HepG2 (cell line): ENCODE measurements at regions of chr10 and their contacts with region 1.

Region 1: DNA sequence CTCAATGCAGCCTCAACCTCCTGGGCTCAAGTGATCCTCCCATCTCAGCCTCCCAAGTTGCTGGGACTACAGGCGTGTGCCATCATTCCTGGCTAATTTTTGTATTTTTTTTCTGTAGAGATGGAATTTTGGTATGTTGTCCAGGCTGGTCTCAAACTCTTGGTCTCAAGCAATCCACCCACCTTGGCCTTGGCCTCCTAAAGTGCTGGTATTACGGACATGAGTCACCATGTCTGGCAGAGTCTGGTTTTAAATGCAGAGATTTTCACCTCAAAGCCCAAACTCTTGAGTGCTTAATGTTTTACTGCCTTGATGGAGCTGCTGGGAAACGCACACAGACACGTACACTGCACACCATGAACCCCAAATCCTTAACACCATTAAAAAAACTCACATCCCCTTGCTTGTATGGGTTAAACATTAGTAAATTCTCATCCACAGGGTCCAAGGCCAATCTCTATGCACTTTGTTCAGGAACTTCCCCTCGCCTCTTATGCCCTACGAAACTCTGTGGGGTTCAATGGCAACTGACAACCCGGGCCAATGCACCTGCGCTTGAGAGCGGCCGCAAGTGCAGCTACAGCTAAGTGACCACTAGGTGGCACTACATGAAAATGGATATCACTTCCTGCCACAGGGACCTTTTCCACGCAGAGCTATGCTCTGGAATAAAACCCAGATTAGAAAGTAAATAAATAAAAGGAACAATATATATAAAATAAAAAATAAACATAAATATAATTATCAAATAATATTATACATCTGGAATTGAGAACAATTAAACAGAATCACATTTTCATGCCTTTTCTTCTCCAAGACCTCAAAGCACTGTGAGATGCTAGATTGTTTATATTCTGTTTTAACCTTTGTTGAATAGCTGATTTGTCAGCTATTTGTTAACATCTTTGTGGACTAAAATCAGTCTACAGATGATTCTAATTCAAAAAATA is 66.9 kb upstream of the AFAP1L2 start:
- DNase-seq: peak; percentile 65
- ATAC-seq: peak; percentile 83
- H3K4me3 ChIP-seq: no peak overlapping the region
- H3K27ac ChIP-seq: peak overlapping the region; percentile 16
- H3K4me1 ChIP-seq: peaks cover 51% of the 10 kb centered on the region
- H3K27me3 ChIP-seq: no peaks in the 10 kb centered on the region
- CTCF ChIP-seq: peak; percentile 85
- EP300 ChIP-seq: no peak
- POLR2A ChIP-seq: no peak
- RAD21 ChIP-seq: peak; percentile 66

Region 2: GRCh38 chr10:114304017-114304570 is 167.1 kb before region 1 on chr10:
- CTCF ChIA-PET with region 1: no interaction called
- POLR2A ChIA-PET with region 1: no interaction called
- in situ Hi-C with region 1: no loop called
- intact Hi-C with region 1: loop called (anchors 1 kb)
- DNase-seq: peak; percentile 62
- ATAC-seq: peak; percentile 86
- H3K4me3 ChIP-seq: no peak overlapping the region
- H3K27ac ChIP-seq: no peak overlapping the region
- H3K4me1 ChIP-seq: peaks cover 5% of the 10 kb centered on the region; the same call in 1 of the 2 replicates
- H3K27me3 ChIP-seq: peaks cover 2 to 46% of the 10 kb centered on the region in 2 experiments
- CTCF ChIP-seq: peak; percentile 89
- EP300 ChIP-seq: no peak
- POLR2A ChIP-seq: no peak
- RAD21 ChIP-seq: peak; percentile 68

Region 3: GRCh38 chr10:114489521-114490310 is 18.5 kb after region 1 on chr10:
- CTCF ChIA-PET with region 1: interaction called, 4 read pairs
- POLR2A ChIA-PET with region 1: no interaction called
- in situ Hi-C with region 1: no loop called
- intact Hi-C with region 1: loop called (anchors 1 kb)
- DNase-seq: peak; percentile 99
- ATAC-seq: peak; percentile 99
- H3K4me3 ChIP-seq: peak overlapping the region in 1 of 3 experiments; percentile 29; a peak in 1 of 6 replicates
- H3K27ac ChIP-seq: peak overlapping the region; percentile 91
- H3K4me1 ChIP-seq: peaks cover 72% of the 10 kb centered on the region
- H3K27me3 ChIP-seq: no peaks in the 10 kb centered on the region
- CTCF ChIP-seq: no peak
- EP300 ChIP-seq: peak; percentile 59 to 93
- POLR2A ChIP-seq: peak in 1 of 2 experiments; percentile 46; a peak in 2 of 4 replicates
- RAD21 ChIP-seq: no peak

Region 4: DNA sequence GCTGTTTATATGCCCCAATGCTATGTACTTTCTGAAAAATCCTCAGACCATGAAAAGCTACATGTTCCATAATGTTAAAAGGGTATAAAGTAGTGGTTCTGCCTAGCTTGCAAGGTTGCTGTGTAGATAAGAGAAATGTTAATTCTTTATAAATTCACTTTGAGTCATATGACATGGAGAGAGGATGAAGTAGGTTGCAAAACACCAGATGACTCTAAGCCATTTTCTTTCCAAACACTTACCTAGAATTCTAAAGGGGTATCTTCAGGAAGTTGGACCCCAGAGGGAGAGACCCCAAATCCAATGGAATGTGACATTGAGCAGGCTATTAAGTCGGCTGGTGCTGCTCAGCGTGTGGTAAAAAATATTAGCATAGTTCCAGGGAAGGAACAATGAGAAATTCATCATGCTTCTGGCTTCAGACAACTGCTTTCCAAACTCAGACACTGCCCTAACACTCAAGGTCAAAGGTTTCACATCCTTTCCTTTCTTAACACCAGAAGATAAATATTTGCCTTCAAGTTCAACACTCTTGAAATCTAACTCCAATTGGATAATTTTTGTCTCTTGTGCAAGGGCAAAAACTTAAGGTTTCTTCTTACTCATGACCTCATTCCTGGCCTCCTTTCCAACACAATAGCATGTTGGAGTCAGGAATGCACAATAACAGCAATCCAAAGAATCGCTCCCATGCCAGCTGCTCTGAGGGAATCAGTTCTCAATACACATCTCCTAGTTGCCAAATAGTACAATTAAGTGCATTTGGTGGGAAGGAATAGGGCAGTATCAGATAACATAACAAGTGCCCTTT is 33.7 kb after region 1 on chr10:
- CTCF ChIA-PET with region 1: no interaction called
- POLR2A ChIA-PET with region 1: no interaction called
- in situ Hi-C with region 1: no loop called
- intact Hi-C with region 1: loop called (anchors 5 kb)
- DNase-seq: peak; percentile 67
- ATAC-seq: peak; percentile 71
- H3K4me3 ChIP-seq: no peak overlapping the region
- H3K27ac ChIP-seq: peak overlapping the region; percentile 16
- H3K4me1 ChIP-seq: peaks cover 68% of the 10 kb centered on the region
- H3K27me3 ChIP-seq: no peaks in the 10 kb centered on the region
- CTCF ChIP-seq: no peak
- EP300 ChIP-seq: peak in 1 of 2 experiments; percentile 47; a peak in 1 of 4 replicates
- POLR2A ChIP-seq: no peak
- RAD21 ChIP-seq: no peak

Region 5: DNA sequence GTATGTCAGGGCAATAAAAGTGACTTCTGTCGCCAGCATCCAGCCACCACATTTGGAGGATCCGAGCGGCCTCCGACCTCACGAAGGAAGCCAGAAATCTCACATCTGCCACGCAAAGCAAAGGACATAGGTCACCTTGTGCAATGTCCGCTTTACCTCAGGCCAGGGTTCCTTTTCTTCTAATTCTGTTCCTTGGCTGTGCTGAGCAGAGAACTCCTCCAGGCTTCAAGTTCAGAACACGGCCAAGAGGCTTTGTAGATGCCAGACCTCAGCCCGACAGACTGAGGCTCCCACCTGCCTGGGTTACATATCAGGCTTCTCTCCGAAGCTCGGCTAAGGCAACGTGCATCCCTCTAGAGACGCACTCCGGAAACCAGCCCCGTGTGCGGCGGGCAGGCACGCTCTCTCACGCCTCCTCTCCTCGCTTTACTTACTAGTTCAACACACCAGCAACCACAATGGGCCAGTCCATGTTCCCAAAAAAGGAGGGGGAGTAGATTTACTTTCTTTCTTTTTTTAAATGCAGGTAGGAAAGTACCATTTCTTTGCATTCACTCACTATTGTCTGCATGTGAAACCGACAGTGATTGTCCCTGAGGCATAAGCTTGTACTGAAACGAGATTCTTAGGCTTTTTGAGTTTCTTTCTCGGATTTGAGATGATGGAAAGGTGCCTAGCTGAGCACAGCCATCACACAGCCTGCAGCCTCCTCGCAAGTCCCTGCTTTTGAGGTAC is 55.4 kb after region 1 on chr10:
- CTCF ChIA-PET with region 1: no interaction called
- POLR2A ChIA-PET with region 1: interaction called, 3 read pairs
- in situ Hi-C with region 1: no loop called
- intact Hi-C with region 1: loop called (anchors 1 kb)
- DNase-seq: peak; percentile 88
- ATAC-seq: peak; percentile 99
- H3K4me3 ChIP-seq: peak overlapping the region; percentile 66 to 84 (median 73)
- H3K27ac ChIP-seq: peak overlapping the region; percentile 92
- H3K4me1 ChIP-seq: peaks cover 48% of the 10 kb centered on the region
- H3K27me3 ChIP-seq: no peaks in the 10 kb centered on the region; a peak in 1 of 5 replicates
- CTCF ChIP-seq: peak; percentile 17
- EP300 ChIP-seq: peak; percentile 35 to 37; a peak in 2 of 4 replicates
- POLR2A ChIP-seq: peak; percentile 91 to 98
- RAD21 ChIP-seq: no peak

Region 6: GRCh38 chr10:114694752-114695151 is 223.5 kb after region 1 on chr10:
- CTCF ChIA-PET with region 1: no interaction called
- POLR2A ChIA-PET with region 1: no interaction called
- in situ Hi-C with region 1: loop called (anchors 5 kb)
- intact Hi-C with region 1: loop called (anchors 2 kb)
- DNase-seq: peak; percentile 35
- ATAC-seq: peak; percentile 75
- H3K4me3 ChIP-seq: no peak overlapping the region
- H3K27ac ChIP-seq: no peak overlapping the region
- H3K4me1 ChIP-seq: no peaks in the 10 kb centered on the region
- H3K27me3 ChIP-seq: no peaks in the 10 kb centered on the region; a peak in 1 of 5 replicates
- CTCF ChIP-seq: peak; percentile 82
- EP300 ChIP-seq: no peak
- POLR2A ChIP-seq: no peak
- RAD21 ChIP-seq: peak; percentile 74

Region 7: DNA sequence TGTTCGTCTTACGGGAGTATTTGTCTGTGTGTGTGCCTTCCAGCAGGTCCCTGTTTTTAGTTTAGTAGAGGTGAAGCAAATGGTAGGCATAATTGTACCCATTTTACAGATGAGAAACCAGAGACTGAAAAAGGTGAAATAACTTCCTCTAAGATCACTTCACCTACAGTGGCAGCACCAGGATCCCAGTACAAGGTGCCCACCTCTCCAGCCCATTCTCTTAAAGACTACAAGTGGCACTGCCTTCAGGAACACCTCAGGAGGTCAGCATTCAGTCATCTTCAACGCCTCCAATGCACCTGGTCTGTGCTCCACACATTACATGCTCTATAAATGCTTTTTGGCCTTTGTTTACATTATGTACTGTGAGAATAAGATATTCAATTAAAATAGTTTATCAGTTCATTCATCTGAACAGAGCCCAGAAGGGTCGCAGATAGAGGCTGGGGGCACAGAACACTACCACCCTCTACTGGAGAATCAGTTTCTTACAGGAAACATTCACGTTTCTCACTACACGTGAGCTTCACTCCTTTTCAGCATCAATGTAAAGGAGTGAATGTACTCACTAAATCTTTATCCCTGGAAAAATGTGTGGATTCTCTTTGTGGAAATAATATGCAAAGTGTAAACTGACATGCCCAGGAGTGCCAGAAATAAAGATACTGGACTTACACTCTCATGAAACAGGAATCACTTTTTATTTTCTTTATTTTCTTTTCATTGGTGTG is 232.3 kb after region 1 on chr10:
- CTCF ChIA-PET with region 1: no interaction called
- POLR2A ChIA-PET with region 1: no interaction called
- in situ Hi-C with region 1: loop called (anchors 5 kb)
- intact Hi-C with region 1: loop called (anchors 1 kb)
- DNase-seq: peak; percentile 13
- ATAC-seq: peak; percentile 53
- H3K4me3 ChIP-seq: no peak overlapping the region
- H3K27ac ChIP-seq: no peak overlapping the region
- H3K4me1 ChIP-seq: no peaks in the 10 kb centered on the region
- H3K27me3 ChIP-seq: 0 out of 5 replicates have a peak, but pooled peaks cover 0 to 4% of the 10 kb centered on the region in 2 experiments
- CTCF ChIP-seq: peak; percentile 75
- EP300 ChIP-seq: no peak
- POLR2A ChIP-seq: no peak
- RAD21 ChIP-seq: peak; percentile 64